ENCODE measurements at regions of chr6 and their contacts with region 1.

Region 1: GRCh38 chr6:73739096-73739495 is 43.1 kb downstream of the CD109 start:
- DNase-seq: no peak
- H3K4me3 ChIP-seq: no peak overlapping the region
- CTCF ChIP-seq: peak; percentile 39

Region 2: GRCh38 chr6:73675466-73676098 is 63.5 kb before region 1 on chr6:
- CTCF ChIA-PET with region 1: interaction called, 276 read pairs
- POLR2A ChIA-PET with region 1: no interaction called
- DNase-seq: no peak
- H3K4me3 ChIP-seq: no peak overlapping the region
- CTCF ChIP-seq: peak; percentile 87

Measured in AG04449 (cell line).